Activated B cell treated with CpG ODN at 0.5 μM for 24 hours (primary cell): ENCODE measurements at regions of chr2 and their contacts with region 1.

Region 1: GRCh38 chr2:38778687-38779082 is 675 bp downstream of the GEMIN6 start:
- DNase-seq: no peak
- ATAC-seq: no peak
- H3K4me3 Mint-ChIP-seq: peak overlapping the region; percentile 91
- H3K27ac Mint-ChIP-seq: peak overlapping the region; percentile 89
- H3K4me1 Mint-ChIP-seq: peaks cover 12% of the 10 kb centered on the region
- H3K27me3 Mint-ChIP-seq: peaks cover 10% of the 10 kb centered on the region
- CTCF ChIP-seq: no peak

Region 2: DNA sequence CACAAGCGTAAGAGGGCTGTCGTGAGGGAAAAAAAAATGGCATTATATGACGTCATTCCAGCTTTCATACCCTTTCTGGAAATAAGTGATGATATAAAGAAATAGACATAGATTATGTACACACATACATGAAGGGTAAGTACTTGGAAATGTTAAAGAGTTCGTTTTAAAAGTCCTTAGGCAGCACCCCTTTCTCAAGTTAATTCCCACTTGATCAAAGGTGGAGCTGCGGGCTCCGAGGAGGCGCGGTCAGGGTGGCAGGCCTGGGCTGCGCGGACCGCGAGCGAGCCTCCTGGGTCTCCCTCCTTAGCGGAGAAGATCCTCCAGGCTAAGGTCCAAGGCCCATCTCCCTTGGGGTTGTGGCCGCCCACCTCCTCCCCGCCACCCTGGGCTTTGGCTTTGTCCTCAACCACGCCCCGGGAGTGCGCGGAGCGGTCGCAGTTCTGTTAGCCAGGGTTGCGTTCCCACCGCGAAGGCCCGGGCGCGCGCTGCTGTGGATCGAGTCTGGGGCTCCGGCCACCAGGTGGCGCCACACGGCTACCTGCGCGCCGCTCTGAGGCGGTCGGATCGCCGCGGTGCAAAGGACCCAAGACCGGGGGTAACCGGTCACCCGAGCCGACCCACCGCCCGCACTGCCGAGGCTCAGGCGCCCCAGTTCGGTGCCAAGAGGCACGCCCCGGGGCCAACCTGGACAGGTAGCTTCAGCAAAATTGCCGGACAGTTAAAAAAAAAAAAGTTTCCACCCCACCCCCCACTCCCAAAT is 242.8 kb before region 1 on chr2:
- CTCF ChIA-PET with region 1: no interaction called
- POLR2A ChIA-PET with region 1: no interaction called
- intact Hi-C with region 1: no loop called
- DNase-seq: peak; percentile 84
- ATAC-seq: peak; percentile 47
- H3K4me3 Mint-ChIP-seq: peak overlapping the region; percentile 75
- H3K27ac Mint-ChIP-seq: no peak overlapping the region
- H3K4me1 Mint-ChIP-seq: peaks cover 39% of the 10 kb centered on the region
- H3K27me3 Mint-ChIP-seq: peaks cover 11% of the 10 kb centered on the region
- CTCF ChIP-seq: peak; percentile 92

Region 3: GRCh38 chr2:38602732-38603401 is 175.8 kb before region 1 on chr2 and contains the start of gene HNRNPLL:
- CTCF ChIA-PET with region 1: no interaction called
- POLR2A ChIA-PET with region 1: no interaction called
- intact Hi-C with region 1: loop called (anchors 1 kb)
- DNase-seq: peak; percentile 84
- ATAC-seq: peak; percentile 87
- H3K4me3 Mint-ChIP-seq: peak within 1 kb of the TSS; percentile 89
- H3K27ac Mint-ChIP-seq: peak within 1 kb of the TSS; percentile 65
- H3K4me1 Mint-ChIP-seq: peaks cover 20% of the 10 kb centered on the region
- H3K27me3 Mint-ChIP-seq: peaks cover 38% of the 10 kb centered on the region
- CTCF ChIP-seq: no peak
- total RNA-seq, gene HNRNPLL: 8.6 and 8.8 TPM in 2 replicates

Region 4: DNA sequence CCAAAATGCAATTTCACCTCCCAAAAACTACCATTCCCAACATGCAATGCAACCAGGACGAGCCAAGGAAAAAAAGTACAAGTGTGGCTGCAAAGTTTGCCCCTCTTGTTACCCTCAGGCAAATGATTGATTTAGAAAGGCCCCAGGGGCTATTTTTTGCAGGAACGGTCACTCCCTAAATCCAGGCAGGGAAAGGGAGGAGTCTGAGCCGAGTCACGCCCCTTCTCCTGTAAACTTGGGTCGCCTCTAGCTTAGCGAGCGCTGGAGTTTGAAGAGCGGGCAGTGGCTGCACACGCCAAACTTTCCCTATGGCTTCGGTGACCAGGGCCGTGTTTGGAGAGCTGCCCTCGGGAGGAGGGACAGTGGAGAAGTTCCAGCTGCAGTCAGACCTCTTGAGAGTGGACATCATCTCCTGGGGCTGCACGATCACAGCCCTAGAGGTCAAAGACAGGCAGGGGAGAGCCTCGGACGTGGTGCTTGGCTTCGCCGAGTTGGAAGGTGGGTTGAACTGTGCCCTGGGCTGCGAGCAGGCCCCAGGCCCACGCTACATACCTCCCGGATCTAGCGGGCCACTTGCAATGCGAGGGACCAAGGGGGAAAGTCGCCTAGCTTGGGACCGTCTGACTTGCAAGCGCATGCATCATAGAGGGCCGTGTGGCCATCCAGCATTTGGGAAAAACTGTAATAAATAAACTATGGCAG is 112.7 kb before region 1 on chr2 and contains the start of gene GALM:
- CTCF ChIA-PET with region 1: no interaction called
- POLR2A ChIA-PET with region 1: no interaction called
- intact Hi-C with region 1: loop called (anchors 1 kb)
- DNase-seq: peak; percentile 23
- ATAC-seq: peak; percentile 78
- H3K4me3 Mint-ChIP-seq: peak within 1 kb of the TSS; percentile 80
- H3K27ac Mint-ChIP-seq: peak within 1 kb of the TSS; percentile 59
- H3K4me1 Mint-ChIP-seq: peaks cover 26% of the 10 kb centered on the region
- H3K27me3 Mint-ChIP-seq: no peaks in the 10 kb centered on the region
- CTCF ChIP-seq: no peak
- total RNA-seq, gene GALM: 3.5 and 5.4 TPM in 2 replicates

Region 5: DNA sequence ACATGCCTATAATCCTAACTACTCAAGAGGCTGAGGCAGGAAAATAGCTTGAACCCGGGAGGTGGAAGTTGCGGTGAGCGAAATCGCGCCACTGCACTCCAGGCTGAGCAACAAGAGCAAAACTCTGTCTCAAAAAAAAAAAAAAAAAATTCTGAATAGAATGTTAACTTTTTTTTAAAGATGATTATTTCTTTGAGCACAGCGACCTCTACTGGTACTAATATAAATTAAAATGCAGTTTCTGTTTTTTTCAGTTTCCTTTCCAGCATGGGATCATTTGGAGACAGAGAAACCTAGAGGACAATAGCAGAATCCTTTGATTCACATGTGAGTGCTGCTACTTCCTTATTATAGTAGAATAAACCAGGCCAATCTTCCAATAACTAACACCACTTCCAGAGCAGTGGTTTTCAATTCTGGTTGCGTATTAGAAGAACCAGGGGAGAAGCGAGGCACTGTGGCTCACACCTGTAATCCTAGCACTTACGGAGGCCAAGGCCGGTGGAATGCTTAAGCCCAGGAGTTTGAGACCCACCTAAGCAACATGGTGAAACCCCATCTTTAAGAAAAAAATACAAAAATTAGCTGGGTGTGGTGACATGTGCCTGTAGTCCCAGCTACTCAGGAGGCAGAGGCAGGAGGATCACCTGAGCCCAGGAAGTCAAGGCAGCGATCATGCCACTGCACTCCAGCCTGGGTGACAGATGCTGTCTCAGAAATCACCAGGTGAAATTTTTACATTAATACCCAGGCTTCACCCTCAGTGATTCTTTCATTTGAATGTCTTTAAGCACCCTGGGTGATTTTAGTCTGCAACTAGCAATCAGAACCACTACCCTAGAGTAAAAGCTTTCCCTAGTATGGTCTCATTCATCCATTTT is 37.6 kb before region 1 on chr2:
- CTCF ChIA-PET with region 1: no interaction called
- POLR2A ChIA-PET with region 1: interaction called, 3 read pairs
- intact Hi-C with region 1: loop called (anchors 5 kb)
- DNase-seq: no peak
- ATAC-seq: peak; percentile 18
- H3K4me3 Mint-ChIP-seq: no peak overlapping the region
- H3K27ac Mint-ChIP-seq: peak overlapping the region; percentile 61
- H3K4me1 Mint-ChIP-seq: peaks cover 29% of the 10 kb centered on the region
- H3K27me3 Mint-ChIP-seq: no peaks in the 10 kb centered on the region
- CTCF ChIP-seq: no peak

Region 6: DNA sequence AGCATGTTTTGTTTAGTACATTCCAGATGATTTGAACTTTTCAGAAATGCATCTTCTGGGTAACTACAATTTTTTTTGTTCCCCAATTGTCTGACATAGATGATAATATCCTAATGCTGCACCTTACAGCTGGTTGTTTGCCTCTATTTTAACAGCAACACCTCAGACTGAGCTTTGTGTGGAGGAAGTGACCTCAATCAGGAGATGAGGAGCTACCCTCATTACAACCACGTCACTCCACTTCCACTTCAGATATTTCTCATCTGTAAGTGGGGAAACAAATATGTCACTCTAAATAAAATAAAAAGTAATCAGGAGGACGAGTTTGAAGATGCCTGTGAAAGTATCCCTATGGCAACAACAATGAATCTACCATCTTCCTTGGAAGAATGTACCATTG is 15.5 kb before region 1 on chr2:
- CTCF ChIA-PET with region 1: no interaction called
- POLR2A ChIA-PET with region 1: no interaction called
- intact Hi-C with region 1: no loop called
- DNase-seq: no peak
- ATAC-seq: no peak
- H3K4me3 Mint-ChIP-seq: no peak overlapping the region
- H3K27ac Mint-ChIP-seq: no peak overlapping the region
- H3K4me1 Mint-ChIP-seq: no peaks in the 10 kb centered on the region
- H3K27me3 Mint-ChIP-seq: no peaks in the 10 kb centered on the region
- CTCF ChIP-seq: no peak

Region 7: GRCh38 chr2:38835015-38835601 is 56.4 kb after region 1 on chr2:
- CTCF ChIA-PET with region 1: no interaction called
- POLR2A ChIA-PET with region 1: no interaction called
- intact Hi-C with region 1: loop called (anchors 2 kb)
- DNase-seq: no peak
- ATAC-seq: no peak
- H3K4me3 Mint-ChIP-seq: no peak overlapping the region
- H3K27ac Mint-ChIP-seq: peak overlapping the region; percentile 93
- H3K4me1 Mint-ChIP-seq: peaks cover 40% of the 10 kb centered on the region
- H3K27me3 Mint-ChIP-seq: no peaks in the 10 kb centered on the region
- CTCF ChIP-seq: no peak

Region 8: DNA sequence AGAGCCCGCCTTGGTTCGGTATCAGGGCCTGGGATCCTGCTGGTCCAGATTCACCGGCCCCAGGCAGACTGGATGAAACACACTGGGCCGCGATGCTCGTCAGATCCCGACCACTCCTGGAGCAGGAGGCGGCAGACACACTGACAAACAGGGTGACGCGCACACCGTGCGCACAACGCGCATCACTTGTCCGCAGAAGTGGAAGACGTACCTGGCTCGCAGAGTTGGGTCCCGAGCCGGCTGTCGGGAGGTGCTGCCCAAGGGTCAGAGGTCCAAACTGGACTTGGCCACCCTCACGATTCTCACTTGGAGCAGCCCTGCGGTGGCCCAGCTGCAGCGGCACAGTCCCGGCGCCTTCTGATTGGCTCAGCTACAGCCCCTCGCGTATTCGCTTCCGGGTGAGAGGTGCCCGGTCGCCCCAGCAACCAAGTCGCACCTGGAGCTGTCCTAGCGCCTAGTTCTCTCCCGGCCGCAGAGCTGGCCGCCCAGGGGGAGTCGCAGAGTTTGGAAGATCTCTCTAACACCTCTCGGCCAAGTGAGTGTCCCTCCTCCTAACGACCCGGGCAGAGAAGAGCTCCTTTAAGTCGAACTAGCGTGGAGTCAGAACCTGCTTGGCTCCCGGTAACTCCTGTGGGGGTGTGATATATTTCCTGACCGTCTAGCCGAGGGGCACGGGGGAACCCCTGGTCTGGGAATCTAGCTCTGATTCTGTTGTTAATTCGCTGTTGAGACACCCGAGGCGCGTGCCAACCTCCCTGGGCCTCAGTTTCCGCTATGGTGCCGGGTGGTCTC is 97.1 kb after region 1 on chr2 and contains the starts of genes DHX57 and MORN2:
- CTCF ChIA-PET with region 1: no interaction called
- POLR2A ChIA-PET with region 1: no interaction called
- intact Hi-C with region 1: loop called (anchors 2 kb)
- DNase-seq: peak; percentile 69
- ATAC-seq: peak; percentile 98
- H3K4me3 Mint-ChIP-seq: peak within 1 kb of the TSS; percentile 93
- H3K27ac Mint-ChIP-seq: peak within 1 kb of the TSS; percentile 79
- H3K4me1 Mint-ChIP-seq: peaks cover 22% of the 10 kb centered on the region
- H3K27me3 Mint-ChIP-seq: no peaks in the 10 kb centered on the region
- CTCF ChIP-seq: no peak
- total RNA-seq, gene DHX57: 20.4 and 21.5 TPM in 2 replicates
- total RNA-seq, gene MORN2: 4.1 and 4.8 TPM in 2 replicates

Region 9: DNA sequence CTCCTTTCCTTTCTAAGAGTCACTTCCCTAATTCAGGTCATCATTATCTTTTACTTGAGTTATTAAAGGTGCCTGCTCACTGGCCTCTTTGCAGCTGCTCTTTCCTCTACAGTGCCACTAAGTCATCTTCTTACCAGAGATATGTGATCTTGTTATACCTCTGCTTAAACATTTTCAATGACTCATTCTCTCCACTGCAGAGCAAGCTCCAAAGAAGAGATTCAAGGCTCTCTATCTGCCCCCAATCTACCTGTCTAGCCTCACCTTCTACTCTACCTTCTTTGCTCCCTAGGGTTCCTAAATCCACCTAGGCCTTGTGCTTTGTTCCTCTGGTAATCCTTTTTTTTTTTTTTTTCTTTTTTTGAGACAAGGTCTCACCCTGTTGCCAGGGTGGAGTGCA is 114.1 kb after region 1 on chr2:
- CTCF ChIA-PET with region 1: no interaction called
- POLR2A ChIA-PET with region 1: no interaction called
- intact Hi-C with region 1: no loop called
- DNase-seq: no peak
- ATAC-seq: no peak
- H3K4me3 Mint-ChIP-seq: no peak overlapping the region
- H3K27ac Mint-ChIP-seq: no peak overlapping the region
- H3K4me1 Mint-ChIP-seq: no peaks in the 10 kb centered on the region
- H3K27me3 Mint-ChIP-seq: peaks cover under 1% of the 10 kb centered on the region
- CTCF ChIP-seq: no peak

Region 10: GRCh38 chr2:38959938-38960608 is 181.4 kb after region 1 on chr2:
- CTCF ChIA-PET with region 1: no interaction called
- POLR2A ChIA-PET with region 1: no interaction called
- intact Hi-C with region 1: no loop called
- DNase-seq: peak; percentile 46
- ATAC-seq: peak; percentile 98
- H3K4me3 Mint-ChIP-seq: peak overlapping the region; percentile 70
- H3K27ac Mint-ChIP-seq: no peak overlapping the region
- H3K4me1 Mint-ChIP-seq: no peaks in the 10 kb centered on the region
- H3K27me3 Mint-ChIP-seq: peaks cover 25% of the 10 kb centered on the region
- CTCF ChIP-seq: no peak